ENCODE measurements at regions of chr3 and their contacts with region 1.

Region 1: GRCh38 chr3:125767641-125768040 is 172.3 kb upstream of the OSBPL11 start:
- DNase-seq: no peak
- H3K4me3 ChIP-seq: no peak overlapping the region
- H3K27ac ChIP-seq: no peak overlapping the region
- H3K4me1 ChIP-seq: no peaks in the 10 kb centered on the region
- H3K27me3 ChIP-seq: no peaks in the 10 kb centered on the region
- CTCF ChIP-seq: no peak

Region 2: DNA sequence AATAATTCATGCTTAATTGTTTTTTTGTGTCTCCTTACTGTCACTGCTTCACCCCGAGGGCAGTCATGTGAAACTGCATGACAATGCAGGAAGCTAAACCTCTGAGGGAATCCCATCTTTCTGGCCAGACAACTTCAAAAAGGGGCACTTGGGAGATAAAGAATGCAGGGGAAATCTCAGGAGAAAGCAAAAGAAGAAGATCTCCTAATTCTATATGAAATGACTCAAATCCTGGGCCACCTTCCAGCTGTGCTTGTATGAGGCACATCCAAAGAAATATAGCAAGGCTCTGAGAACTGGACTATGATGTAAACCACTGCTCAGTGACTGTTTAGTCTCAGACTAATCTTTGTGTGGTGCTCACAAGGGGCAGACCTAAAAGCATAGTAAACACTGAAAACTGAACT is 1060.0 kb before region 1 on chr3:
- intact Hi-C with region 1: no loop called
- DNase-seq: no peak
- H3K4me3 ChIP-seq: no peak overlapping the region
- H3K27ac ChIP-seq: no peak overlapping the region
- H3K4me1 ChIP-seq: no peaks in the 10 kb centered on the region
- H3K27me3 ChIP-seq: no peaks in the 10 kb centered on the region
- CTCF ChIP-seq: no peak

Region 3: GRCh38 chr3:125662675-125663074 is 105.0 kb before region 1 on chr3:
- intact Hi-C with region 1: no loop called
- DNase-seq: no peak
- H3K4me3 ChIP-seq: no peak overlapping the region
- H3K27ac ChIP-seq: no peak overlapping the region
- H3K4me1 ChIP-seq: no peaks in the 10 kb centered on the region
- H3K27me3 ChIP-seq: no peaks in the 10 kb centered on the region
- CTCF ChIP-seq: no peak

Region 4: DNA sequence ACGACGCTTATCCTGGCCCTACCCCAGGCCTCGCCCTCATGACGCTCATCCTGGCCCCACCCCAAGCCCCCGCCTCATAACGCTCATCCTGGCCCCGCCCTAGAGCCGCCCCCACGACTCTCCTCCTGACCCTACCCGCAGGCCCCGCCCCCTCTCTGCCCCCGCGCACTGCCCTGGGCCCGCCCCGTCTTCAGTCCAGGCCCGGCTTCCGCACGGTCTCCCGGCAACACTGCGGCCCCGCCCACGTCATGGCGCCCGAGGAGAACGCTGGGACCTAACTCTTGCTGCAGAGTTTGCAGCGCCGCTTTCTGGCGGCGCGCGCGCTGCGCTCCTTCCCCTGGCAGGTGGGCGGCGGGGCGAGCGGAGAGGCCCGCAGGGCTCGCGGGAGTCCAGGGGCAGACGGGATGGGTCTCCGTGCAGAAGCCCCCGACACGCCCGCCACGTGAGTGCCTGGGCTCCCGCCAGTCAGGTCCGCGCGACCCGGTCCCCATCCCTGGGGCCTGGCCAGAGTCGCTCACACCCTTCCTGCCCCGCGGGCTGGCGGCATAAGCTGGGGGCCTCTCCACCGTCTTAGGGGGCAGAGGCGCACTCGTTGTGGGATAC is 148.8 kb after region 1 on chr3:
- intact Hi-C with region 1: loop called (anchors 10 kb)
- DNase-seq: no peak
- H3K4me3 ChIP-seq: peak overlapping the region; percentile 76
- H3K27ac ChIP-seq: peak overlapping the region; percentile 72
- H3K4me1 ChIP-seq: no peaks in the 10 kb centered on the region
- H3K27me3 ChIP-seq: no peaks in the 10 kb centered on the region
- CTCF ChIP-seq: no peak

Measured in colonic mucosa (tissue), 4 donors.